K562 (cell line): ENCODE measurements at regions of chr1 and their contacts with region 1.

Region 1: DNA sequence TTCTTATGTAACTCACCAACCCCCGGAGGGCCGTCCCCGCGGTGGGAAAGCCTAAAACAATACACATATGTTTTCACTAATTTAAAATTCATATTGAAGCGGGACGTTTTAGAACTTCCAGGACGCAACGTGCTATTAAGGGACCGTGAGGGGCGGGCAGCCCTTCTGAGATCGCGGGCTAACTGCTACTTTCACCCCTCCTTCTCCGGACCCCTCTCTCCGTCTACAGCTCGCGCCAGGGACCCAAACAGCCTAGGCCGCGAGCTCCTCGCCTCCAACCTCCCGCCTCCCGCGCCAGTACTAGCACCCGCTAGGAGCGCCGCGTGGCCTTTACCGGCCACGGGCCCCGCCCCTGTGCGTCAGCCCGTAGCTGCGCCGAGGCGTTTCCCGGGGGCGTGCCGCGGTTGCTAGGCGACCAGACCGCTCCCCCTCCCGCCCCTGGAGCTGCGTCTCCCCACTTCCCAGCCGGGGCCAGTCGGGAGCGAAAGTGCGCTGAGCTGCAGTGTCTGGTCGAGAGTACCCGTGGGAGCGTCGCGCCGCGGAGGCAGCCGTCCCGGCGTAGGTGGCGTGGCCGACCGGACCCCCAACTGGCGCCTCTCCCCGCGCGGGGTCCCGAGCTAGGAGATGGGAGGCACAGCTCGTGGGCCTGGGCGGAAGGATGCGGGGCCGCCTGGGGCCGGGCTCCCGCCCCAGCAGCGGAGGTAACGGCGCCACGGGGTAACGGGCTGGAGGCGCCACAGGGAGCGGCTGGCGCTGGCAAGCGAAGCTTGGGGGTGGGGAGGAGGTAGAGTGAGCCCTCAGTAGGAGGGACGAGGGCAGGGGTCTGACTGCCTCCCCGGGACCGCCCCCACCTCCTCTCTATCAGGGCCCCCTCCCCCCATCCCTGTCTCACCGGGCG is at the start of gene DYRK3:
- DNase-seq: peak; percentile 98 to 99 (median 99)
- ATAC-seq: peak; percentile 93
- H3K4me3 ChIP-seq: peak within 1 kb of the TSS; percentile 87
- H3K27ac ChIP-seq: peak within 1 kb of the TSS; percentile 77
- H3K4me1 ChIP-seq: peaks cover 14 to 24% of the 10 kb centered on the region in 2 experiments
- H3K27me3 ChIP-seq: no peaks in the 10 kb centered on the region
- CTCF ChIP-seq: peak in 2 of 3 experiments; percentile 30; a peak in 2 of 6 replicates
- EP300 ChIP-seq: no peak; the same call in 1 of the 2 replicates
- POLR2A ChIP-seq: peak; percentile 90
- RAD21 ChIP-seq: no peak; a peak in 1 of 4 replicates
- polyA plus RNA-seq, gene DYRK3: 4.5 to 5.2 TPM

Region 2: GRCh38 chr1:206651958-206652890 is 16.9 kb after region 1 on chr1:
- CTCF ChIA-PET with region 1: no interaction called
- POLR2A ChIA-PET with region 1: interaction called, 57 read pairs
- in situ Hi-C with region 1: no loop called
- intact Hi-C with region 1: loop called (anchors 1 kb)
- DNase-seq: peak; percentile 28 to 83 (median 56)
- ATAC-seq: peak; percentile 85
- H3K4me3 ChIP-seq: no peak overlapping the region
- H3K27ac ChIP-seq: peak overlapping the region; percentile 71
- H3K4me1 ChIP-seq: peaks cover 16 to 60% of the 10 kb centered on the region in 2 experiments
- H3K27me3 ChIP-seq: no peaks in the 10 kb centered on the region
- CTCF ChIP-seq: 0 out of 6 replicates have a peak, but pooled peaks of 1 of the 3 experiments have one; percentile 19
- EP300 ChIP-seq: peak; percentile 99
- POLR2A ChIP-seq: no peak
- RAD21 ChIP-seq: peak; percentile 14 to 36; a peak in 2 of 4 replicates

Region 3: GRCh38 chr1:206658264-206658980 is 23.1 kb after region 1 on chr1:
- CTCF ChIA-PET with region 1: interaction called, 63 read pairs
- POLR2A ChIA-PET with region 1: interaction called, 29 read pairs
- in situ Hi-C with region 1: no loop called
- intact Hi-C with region 1: no loop called
- DNase-seq: peak; percentile 89 to 95 (median 92)
- ATAC-seq: peak; percentile 89
- H3K4me3 ChIP-seq: no peak overlapping the region
- H3K27ac ChIP-seq: peak overlapping the region; percentile 65; the same call in 2 of the 3 replicates
- H3K4me1 ChIP-seq: peaks cover 30 to 58% of the 10 kb centered on the region in 2 experiments
- H3K27me3 ChIP-seq: no peaks in the 10 kb centered on the region
- CTCF ChIP-seq: peak; percentile 93 to 100 (median 95)
- EP300 ChIP-seq: no peak
- POLR2A ChIP-seq: 0 out of 2 replicates have a peak, but pooled peaks have one; percentile 33
- RAD21 ChIP-seq: peak; percentile 78 to 87

Region 4: GRCh38 chr1:206803221-206803730 is 167.9 kb after region 1 on chr1:
- CTCF ChIA-PET with region 1: interaction called, 3 read pairs
- POLR2A ChIA-PET with region 1: no interaction called
- in situ Hi-C with region 1: no loop called
- intact Hi-C with region 1: loop called (anchors 1 kb)
- DNase-seq: no peak
- ATAC-seq: no peak; the same call in 2 of the 3 replicates
- H3K4me3 ChIP-seq: no peak overlapping the region
- H3K27ac ChIP-seq: no peak overlapping the region
- H3K4me1 ChIP-seq: no peaks in the 10 kb centered on the region; a peak in 1 of 5 replicates
- H3K27me3 ChIP-seq: peaks cover 13 to 29% of the 10 kb centered on the region in 2 experiments
- CTCF ChIP-seq: no peak
- EP300 ChIP-seq: no peak
- POLR2A ChIP-seq: no peak
- RAD21 ChIP-seq: no peak

Region 5: GRCh38 chr1:206808615-206809014 is 173.3 kb after region 1 on chr1:
- CTCF ChIA-PET with region 1: interaction called, 3 read pairs
- POLR2A ChIA-PET with region 1: no interaction called
- in situ Hi-C with region 1: no loop called
- intact Hi-C with region 1: loop called (anchors 1 kb)
- DNase-seq: peak; percentile 30 to 71 (median 48)
- ATAC-seq: peak; percentile 97
- H3K4me3 ChIP-seq: no peak overlapping the region
- H3K27ac ChIP-seq: no peak overlapping the region
- H3K4me1 ChIP-seq: no peaks in the 10 kb centered on the region
- H3K27me3 ChIP-seq: peaks cover 5 to 13% of the 10 kb centered on the region in 2 experiments; a peak in 3 of 5 replicates
- CTCF ChIP-seq: peak; percentile 75 to 81 (median 77)
- EP300 ChIP-seq: no peak
- POLR2A ChIP-seq: no peak
- RAD21 ChIP-seq: peak; percentile 92 to 95